ENCODE measurements at regions of chr3 and their contacts with region 1.

Region 1: DNA sequence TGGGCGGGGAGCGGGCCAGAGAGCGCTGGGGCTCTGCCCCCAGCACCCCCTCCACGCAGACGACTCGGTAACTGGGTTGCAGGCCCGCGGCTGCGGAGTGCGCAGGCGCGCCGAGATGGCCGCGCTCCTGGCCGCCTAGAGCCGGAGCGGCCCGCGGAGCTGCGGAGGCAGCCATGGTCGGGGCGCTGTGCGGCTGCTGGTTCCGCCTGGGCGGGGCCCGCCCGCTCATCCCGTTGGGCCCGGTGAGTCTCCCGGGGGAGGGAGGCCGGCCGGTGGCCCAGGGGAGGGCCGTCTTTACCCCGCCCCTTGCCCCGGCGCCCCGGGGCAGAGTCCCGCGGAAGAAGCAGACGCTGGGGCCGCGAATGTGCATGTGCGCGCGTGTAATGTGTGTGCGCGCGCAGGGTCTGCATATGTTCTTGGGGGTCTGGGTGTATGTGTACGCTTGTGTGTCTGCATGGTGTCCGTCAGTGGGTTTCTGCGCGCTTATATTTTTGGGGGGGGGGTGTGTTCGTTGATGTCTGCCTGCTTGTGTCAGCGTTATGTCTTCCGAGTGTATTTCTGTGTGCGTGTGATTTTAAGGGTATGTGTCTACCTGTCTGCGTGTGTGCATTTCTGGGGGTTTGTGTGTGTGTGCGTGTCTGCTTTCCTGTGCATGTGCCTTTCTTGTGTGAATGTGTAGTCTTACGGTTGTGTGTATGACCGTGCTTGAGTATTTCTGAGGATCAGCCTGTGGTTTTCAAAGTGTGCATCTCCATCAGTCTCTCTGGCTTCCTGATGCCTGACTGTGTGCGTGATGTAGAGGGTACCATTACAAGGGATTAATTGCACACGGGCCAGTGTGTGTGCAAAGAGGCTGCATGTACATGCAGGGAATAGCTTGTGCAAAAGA is at the start of gene ABHD14A:
- DNase-seq: peak; percentile 67
- H3K4me3 Mint-ChIP-seq: peak within 1 kb of the TSS; percentile 96
- H3K27ac Mint-ChIP-seq: peak within 1 kb of the TSS; percentile 93
- H3K4me1 Mint-ChIP-seq: peaks cover 34% of the 10 kb centered on the region
- H3K27me3 Mint-ChIP-seq: no peaks in the 10 kb centered on the region
- total RNA-seq, gene ABHD14A: 11.5 to 16.7 TPM

Region 2: GRCh38 chr3:51941798-51942602 is 33.2 kb before region 1 on chr3 and contains the starts of genes PARP3 and RRP9:
- CTCF ChIA-PET with region 1: interaction called, 35 read pairs
- POLR2A ChIA-PET with region 1: interaction called, 3 read pairs
- DNase-seq: peak; percentile 100
- H3K4me3 Mint-ChIP-seq: peak within 1 kb of the TSS; percentile 92
- H3K27ac Mint-ChIP-seq: peak within 1 kb of the TSS; percentile 92
- H3K4me1 Mint-ChIP-seq: peaks cover 45% of the 10 kb centered on the region
- H3K27me3 Mint-ChIP-seq: no peaks in the 10 kb centered on the region
- total RNA-seq, gene PARP3: 22.1 to 22.9 TPM
- total RNA-seq, gene RRP9: 24.3 to 25.1 TPM

Region 3: GRCh38 chr3:51949126-51949525 is 26.1 kb before region 1 on chr3:
- CTCF ChIA-PET with region 1: interaction called, 11 read pairs
- POLR2A ChIA-PET with region 1: no interaction called
- DNase-seq: no peak
- H3K4me3 Mint-ChIP-seq: no peak overlapping the region
- H3K27ac Mint-ChIP-seq: no peak overlapping the region
- H3K4me1 Mint-ChIP-seq: peaks cover under 1% of the 10 kb centered on the region
- H3K27me3 Mint-ChIP-seq: peaks cover 14% of the 10 kb centered on the region

Region 4: GRCh38 chr3:51955893-51956770 is 19.1 kb before region 1 on chr3:
- CTCF ChIA-PET with region 1: interaction called, 43 read pairs
- POLR2A ChIA-PET with region 1: no interaction called
- DNase-seq: peak; percentile 27
- H3K4me3 Mint-ChIP-seq: peak overlapping the region; percentile 13
- H3K27ac Mint-ChIP-seq: no peak overlapping the region
- H3K4me1 Mint-ChIP-seq: peaks cover 11% of the 10 kb centered on the region
- H3K27me3 Mint-ChIP-seq: peaks cover 34% of the 10 kb centered on the region

Region 5: DNA sequence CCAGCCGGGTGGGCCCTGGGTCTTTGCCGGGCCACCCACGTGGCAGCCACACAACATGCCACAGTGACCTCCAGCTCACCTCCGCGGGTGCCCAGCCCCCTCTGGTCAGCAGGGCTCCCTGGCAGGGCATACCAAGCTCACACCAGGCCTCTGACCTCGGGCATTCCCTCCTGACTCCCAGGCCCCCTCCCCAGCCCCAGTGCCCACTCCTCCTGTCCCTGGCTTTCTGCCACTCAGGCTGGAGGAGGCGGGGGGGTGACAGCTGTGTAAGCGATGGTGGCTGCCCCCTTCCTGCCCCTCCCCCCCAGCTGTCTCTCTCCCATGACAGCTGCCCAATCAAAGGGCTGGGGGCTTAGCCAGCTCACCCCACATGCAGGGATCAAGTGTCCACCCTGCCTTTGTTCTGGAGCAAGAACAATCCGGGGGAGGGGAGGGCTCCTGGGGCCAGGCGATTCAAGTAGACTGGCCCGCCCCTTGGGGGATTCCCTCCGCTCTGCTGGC is 11.2 kb before region 1 on chr3:
- CTCF ChIA-PET with region 1: interaction called, 43 read pairs
- POLR2A ChIA-PET with region 1: no interaction called
- DNase-seq: no peak
- H3K4me3 Mint-ChIP-seq: no peak overlapping the region
- H3K27ac Mint-ChIP-seq: no peak overlapping the region
- H3K4me1 Mint-ChIP-seq: peaks cover 13% of the 10 kb centered on the region
- H3K27me3 Mint-ChIP-seq: peaks cover 5% of the 10 kb centered on the region

Region 6: DNA sequence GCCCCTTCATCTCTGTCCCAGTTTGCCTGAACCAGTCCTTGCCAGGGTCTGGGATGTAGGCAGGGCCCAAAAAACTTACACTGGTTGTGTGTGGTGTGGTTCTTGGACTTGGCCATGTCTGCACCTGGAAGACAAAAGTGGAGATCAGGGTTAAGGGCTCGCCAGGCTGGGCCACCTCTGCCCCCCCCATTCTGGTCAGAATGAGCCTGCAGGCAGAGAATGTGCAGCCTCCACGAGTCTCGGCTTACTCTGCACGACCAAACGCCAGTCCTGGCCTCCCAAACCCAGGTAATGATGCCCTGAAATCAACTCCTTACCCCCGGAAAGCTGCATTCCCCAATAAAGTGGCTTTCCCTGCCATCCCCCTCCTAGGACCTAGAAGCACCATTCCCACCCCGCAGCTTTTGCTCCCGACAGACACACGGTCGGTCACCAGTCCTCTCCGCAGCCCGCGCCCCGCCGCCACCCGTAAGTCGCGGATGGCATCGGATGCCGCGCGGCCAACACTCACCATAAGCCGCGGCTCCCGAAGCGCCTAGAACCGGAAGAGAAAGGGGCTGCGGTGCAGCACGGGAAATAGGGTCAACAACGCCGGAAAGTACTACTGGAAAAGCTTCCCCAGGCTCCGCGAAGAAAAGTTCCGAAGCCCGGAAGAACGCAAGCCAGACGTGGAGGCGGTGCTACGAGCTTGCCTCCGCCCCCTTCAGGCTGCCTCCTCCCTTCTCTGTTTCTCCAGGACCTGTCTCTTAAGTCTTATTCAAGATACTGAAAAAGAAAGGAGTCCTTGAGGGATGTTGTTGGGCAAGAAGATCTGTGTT is 20.3 kb after region 1 on chr3 and contains the start of gene RPL29:
- CTCF ChIA-PET with region 1: interaction called, 20 read pairs
- POLR2A ChIA-PET with region 1: no interaction called
- DNase-seq: peak; percentile 94
- H3K4me3 Mint-ChIP-seq: peak within 1 kb of the TSS; percentile 99
- H3K27ac Mint-ChIP-seq: peak within 1 kb of the TSS; percentile 100
- H3K4me1 Mint-ChIP-seq: peaks cover 45% of the 10 kb centered on the region
- H3K27me3 Mint-ChIP-seq: peaks cover 10% of the 10 kb centered on the region
- total RNA-seq, gene RPL29: 1,423 to 1,425 TPM